Endothelial cell of umbilical vein (primary cell): ENCODE measurements at regions of chrX and their contacts with region 1.

Region 1: GRCh38 chrX:99857455-99857854 is 552.6 kb downstream of the PCDH19 start:
- DNase-seq: no peak
- H3K4me3 ChIP-seq: no peak overlapping the region
- H3K27ac ChIP-seq: no peak overlapping the region
- H3K4me1 ChIP-seq: no peaks in the 10 kb centered on the region
- H3K27me3 ChIP-seq: no peaks in the 10 kb centered on the region
- CTCF ChIP-seq: peak in 1 of 2 donors; percentile 6
- POLR2A ChIP-seq: no peak

Region 2: DNA sequence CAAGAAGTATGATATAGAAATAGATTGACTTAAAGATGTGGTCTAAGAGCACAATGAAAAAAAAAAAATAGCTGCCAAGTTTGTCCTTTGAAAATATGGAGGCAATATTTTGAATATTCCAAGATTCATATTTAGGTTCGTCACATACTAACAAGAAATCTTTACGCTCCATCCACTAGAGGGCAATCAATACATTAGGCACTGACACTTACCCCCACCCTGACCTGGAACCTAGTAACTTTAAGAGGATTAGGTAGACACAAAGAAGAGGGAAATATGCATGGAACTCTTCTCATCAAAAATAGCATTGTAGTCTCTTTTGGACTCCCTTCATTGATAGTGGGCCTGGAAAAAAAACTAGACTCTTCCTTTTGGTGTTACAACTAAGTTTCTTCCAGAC is 555.5 kb before region 1 on chrX:
- CTCF ChIA-PET with region 1: no interaction called
- POLR2A ChIA-PET with region 1: no interaction called
- dilution Hi-C with region 1: no loop called
- intact Hi-C with region 1: no loop called
- DNase-seq: no peak
- H3K4me3 ChIP-seq: no peak overlapping the region
- H3K27ac ChIP-seq: no peak overlapping the region
- H3K4me1 ChIP-seq: no peaks in the 10 kb centered on the region
- H3K27me3 ChIP-seq: no peaks in the 10 kb centered on the region
- CTCF ChIP-seq: no peak
- POLR2A ChIP-seq: no peak

Region 3: DNA sequence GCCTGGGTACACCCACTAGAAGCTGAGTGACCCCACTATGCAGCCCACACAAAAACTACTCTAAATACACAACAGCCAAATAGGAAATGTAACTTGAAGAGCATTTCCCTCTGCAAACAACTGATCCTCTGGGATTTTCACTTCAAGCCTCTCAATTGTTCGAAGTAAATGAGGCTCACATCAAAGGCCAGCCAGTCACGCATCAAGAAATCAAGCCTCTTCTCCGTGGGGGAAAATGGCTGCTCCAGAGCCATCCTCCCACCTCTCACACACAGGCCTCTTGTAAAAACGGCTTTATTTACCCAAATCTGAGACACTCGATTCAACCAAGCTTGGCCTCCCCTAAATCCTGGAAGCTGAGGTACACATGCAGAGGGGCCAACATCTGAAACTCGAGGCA is 538.3 kb after region 1 on chrX:
- CTCF ChIA-PET with region 1: no interaction called
- POLR2A ChIA-PET with region 1: no interaction called
- dilution Hi-C with region 1: no loop called
- intact Hi-C with region 1: loop called (anchors 10 kb)
- DNase-seq: no peak
- H3K4me3 ChIP-seq: no peak overlapping the region
- H3K27ac ChIP-seq: no peak overlapping the region
- H3K4me1 ChIP-seq: no peaks in the 10 kb centered on the region
- H3K27me3 ChIP-seq: no peaks in the 10 kb centered on the region
- CTCF ChIP-seq: no peak
- POLR2A ChIP-seq: no peak

Region 4: GRCh38 chrX:100477958-100478357 is 620.5 kb after region 1 on chrX:
- CTCF ChIA-PET with region 1: no interaction called
- POLR2A ChIA-PET with region 1: no interaction called
- dilution Hi-C with region 1: no loop called
- intact Hi-C with region 1: no loop called
- DNase-seq: no peak
- H3K4me3 ChIP-seq: no peak overlapping the region
- H3K27ac ChIP-seq: no peak overlapping the region
- H3K4me1 ChIP-seq: no peaks in the 10 kb centered on the region
- H3K27me3 ChIP-seq: no peaks in the 10 kb centered on the region
- CTCF ChIP-seq: no peak
- POLR2A ChIP-seq: no peak